ENCODE measurements at regions of chr10 and their contacts with region 1.

Region 1: DNA sequence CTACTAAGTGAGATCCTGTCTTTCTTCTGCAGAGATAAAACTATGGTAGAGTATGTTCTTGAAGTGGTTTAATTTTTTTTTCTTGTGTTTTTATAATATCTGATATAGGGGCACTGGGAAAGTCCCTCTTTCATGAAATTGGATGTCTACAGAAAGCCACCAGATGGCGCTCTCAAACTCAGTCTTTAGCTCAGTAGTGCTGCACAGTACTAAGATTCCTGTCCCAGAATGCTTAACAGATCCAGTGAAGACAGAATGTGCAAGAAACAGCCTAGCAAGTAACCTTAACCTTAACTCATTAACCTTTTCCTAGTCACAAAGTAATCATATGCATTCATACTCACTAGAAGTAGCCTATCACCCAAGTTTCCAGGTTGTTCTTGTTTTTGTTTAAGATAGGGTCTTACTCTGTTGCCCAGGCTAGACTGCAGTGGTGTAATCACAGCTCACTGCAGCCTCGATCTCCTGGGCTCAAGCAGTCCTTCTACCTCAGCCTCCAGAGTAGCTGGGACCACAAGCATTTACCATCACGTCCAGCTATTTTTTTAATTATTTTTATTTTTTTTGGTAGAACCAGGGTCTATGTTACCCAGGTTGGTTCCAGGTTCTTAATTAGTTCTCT is 56.7 kb downstream of the IDE start:
- DNase-seq: peak; percentile 51 to 76 (median 65)
- H3K4me3 ChIP-seq: no peak overlapping the region
- H3K4me3 Mint-ChIP-seq: no peak overlapping the region
- H3K27ac ChIP-seq: no peak overlapping the region
- H3K27ac Mint-ChIP-seq: peak overlapping the region in 5 of 8 donors; percentile 0 to 66 (median 12)
- H3K4me1 ChIP-seq: peaks cover 5% of the 10 kb centered on the region
- H3K4me1 Mint-ChIP-seq: peaks cover 7 to 8% (median 8%) of the 10 kb centered on the region in 3 donors
- H3K27me3 ChIP-seq: no peaks in the 10 kb centered on the region
- H3K27me3 Mint-ChIP-seq: no peaks in the 10 kb centered on the region

Region 2: GRCh38 chr10:92530421-92530820 is 13.3 kb after region 1 on chr10:
- CTCF ChIA-PET with region 1: interaction called, 11 read pairs
- POLR2A ChIA-PET with region 1: no interaction called
- DNase-seq: no peak
- H3K4me3 ChIP-seq: no peak overlapping the region
- H3K4me3 Mint-ChIP-seq: no peak overlapping the region
- H3K27ac ChIP-seq: no peak overlapping the region
- H3K27ac Mint-ChIP-seq: no peak overlapping the region
- H3K4me1 ChIP-seq: no peaks in the 10 kb centered on the region
- H3K4me1 Mint-ChIP-seq: no peaks in the 10 kb centered on the region
- H3K27me3 ChIP-seq: no peaks in the 10 kb centered on the region
- H3K27me3 Mint-ChIP-seq: no peaks in the 10 kb centered on the region

Region 3: GRCh38 chr10:92573798-92574547 is 56.8 kb after region 1 on chr10 and contains the start of gene IDE:
- CTCF ChIA-PET with region 1: interaction called, 84 read pairs
- POLR2A ChIA-PET with region 1: interaction called, 10 read pairs
- DNase-seq: peak; percentile 69 to 87 (median 77)
- H3K4me3 ChIP-seq: peak within 1 kb of the TSS; percentile 96
- H3K4me3 Mint-ChIP-seq: peak within 1 kb of the TSS; percentile 69 to 95 (median 90)
- H3K27ac ChIP-seq: peak within 1 kb of the TSS; percentile 90
- H3K27ac Mint-ChIP-seq: peak within 1 kb of the TSS; percentile 80 to 96 (median 92)
- H3K4me1 ChIP-seq: peaks cover 9% of the 10 kb centered on the region
- H3K4me1 Mint-ChIP-seq: peaks cover 34 to 43% (median 42%) of the 10 kb centered on the region in 3 donors
- H3K27me3 ChIP-seq: no peaks in the 10 kb centered on the region
- H3K27me3 Mint-ChIP-seq: no peaks in the 10 kb centered on the region
- total RNA-seq, gene IDE: 42.4 to 42.8 TPM

Region 4: GRCh38 chr10:93138113-93138870 is 621.1 kb after region 1 on chr10:
- CTCF ChIA-PET with region 1: no interaction called
- POLR2A ChIA-PET with region 1: no interaction called
- DNase-seq: no peak
- H3K4me3 ChIP-seq: no peak overlapping the region
- H3K4me3 Mint-ChIP-seq: no peak overlapping the region
- H3K27ac ChIP-seq: no peak overlapping the region
- H3K27ac Mint-ChIP-seq: no peak overlapping the region
- H3K4me1 ChIP-seq: no peaks in the 10 kb centered on the region
- H3K4me1 Mint-ChIP-seq: no peaks in the 10 kb centered on the region
- H3K27me3 ChIP-seq: no peaks in the 10 kb centered on the region
- H3K27me3 Mint-ChIP-seq: peaks cover 6 to 38% of the 10 kb centered on the region in 2 donors